ENCODE measurements at regions of chr11 and their contacts with region 1.

Region 1: DNA sequence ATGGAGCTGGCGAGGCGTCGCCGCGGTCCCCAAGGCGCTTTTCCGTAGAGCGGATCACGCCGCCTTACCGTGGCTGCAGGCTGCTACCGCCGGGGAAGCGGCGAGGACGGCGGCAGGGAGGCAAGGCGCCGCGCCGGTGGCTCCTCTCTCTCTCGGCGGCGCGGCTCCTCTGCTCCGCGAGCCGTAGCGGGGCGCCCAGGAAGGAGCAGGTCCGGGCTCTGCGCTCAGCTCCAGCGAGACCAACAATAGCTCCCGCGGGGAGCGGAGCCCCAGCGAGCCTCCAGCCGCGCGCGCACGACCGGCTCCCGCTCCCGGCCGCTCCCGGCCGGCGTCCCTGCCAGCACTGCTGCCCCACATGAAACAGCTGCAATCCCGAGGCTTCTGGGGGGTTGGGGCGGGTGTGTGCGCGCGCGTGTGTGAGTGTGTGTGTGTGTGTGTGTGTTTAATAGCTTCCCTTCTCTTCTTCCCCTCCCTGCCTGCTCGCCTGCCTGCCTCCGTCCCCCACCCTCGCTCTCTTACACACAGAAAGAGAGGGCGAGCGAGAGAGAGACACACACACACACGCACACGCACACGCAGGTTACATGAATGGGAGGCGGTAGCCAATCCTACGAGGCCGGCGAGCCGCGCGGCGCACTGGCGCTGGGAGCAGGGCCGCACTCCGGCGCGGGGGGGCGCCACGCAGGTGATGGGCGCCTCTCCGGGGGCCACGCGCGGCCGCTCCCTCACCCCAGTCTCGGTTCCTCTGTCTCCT is at the start of gene TENM4:
- DNase-seq: peak; percentile 59
- ATAC-seq: peak; percentile 78
- H3K4me3 Mint-ChIP-seq: peak within 1 kb of the TSS; percentile 84
- H3K27ac Mint-ChIP-seq: peak within 1 kb of the TSS; percentile 87
- H3K4me1 Mint-ChIP-seq: peaks cover 44% of the 10 kb centered on the region
- H3K27me3 Mint-ChIP-seq: peaks cover 32% of the 10 kb centered on the region
- CTCF ChIP-seq: no peak
- total RNA-seq, gene TENM4: 1.9 and 2.4 TPM in 2 replicates

Region 2: DNA sequence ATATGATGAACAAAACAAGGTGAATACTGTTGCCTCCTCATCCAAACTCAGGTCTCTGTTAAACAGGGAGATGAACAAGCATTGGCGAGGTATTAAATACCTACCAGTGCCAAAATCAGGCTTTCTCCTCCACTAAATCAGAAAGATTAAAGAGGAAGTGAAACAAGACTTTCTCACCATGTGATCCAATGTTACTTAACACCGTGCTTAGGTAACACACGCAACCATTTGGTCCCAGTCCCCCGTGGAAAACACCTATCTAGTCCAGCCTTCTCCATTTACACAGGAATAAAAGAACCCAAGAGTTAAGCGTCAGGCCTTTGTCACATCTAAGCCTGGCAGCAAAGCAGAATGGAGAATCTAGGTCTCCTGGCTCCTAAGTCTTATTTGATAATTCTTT is 34.2 kb before region 1 on chr11:
- CTCF ChIA-PET with region 1: interaction called, 3 read pairs
- POLR2A ChIA-PET with region 1: no interaction called
- intact Hi-C with region 1: loop called (anchors 1 kb)
- DNase-seq: no peak
- ATAC-seq: peak; percentile 77
- H3K4me3 Mint-ChIP-seq: peak overlapping the region; percentile 15
- H3K27ac Mint-ChIP-seq: peak overlapping the region; percentile 47
- H3K4me1 Mint-ChIP-seq: peaks cover 12% of the 10 kb centered on the region
- H3K27me3 Mint-ChIP-seq: no peaks in the 10 kb centered on the region
- CTCF ChIP-seq: no peak

Region 3: GRCh38 chr11:79482800-79483199 is 42.2 kb after region 1 on chr11:
- CTCF ChIA-PET with region 1: interaction called, 3 read pairs
- POLR2A ChIA-PET with region 1: interaction called, 12 read pairs
- intact Hi-C with region 1: loop called (anchors 2 kb)
- DNase-seq: no peak
- ATAC-seq: peak; percentile 82
- H3K4me3 Mint-ChIP-seq: peak overlapping the region; percentile 24
- H3K27ac Mint-ChIP-seq: peak overlapping the region; percentile 59
- H3K4me1 Mint-ChIP-seq: peaks cover 24% of the 10 kb centered on the region
- H3K27me3 Mint-ChIP-seq: no peaks in the 10 kb centered on the region
- CTCF ChIP-seq: no peak

Region 4: GRCh38 chr11:80815752-80816453 is 1375.3 kb after region 1 on chr11:
- CTCF ChIA-PET with region 1: no interaction called
- POLR2A ChIA-PET with region 1: no interaction called
- intact Hi-C with region 1: loop called (anchors 5 kb)
- DNase-seq: no peak
- ATAC-seq: peak; percentile 76
- H3K4me3 Mint-ChIP-seq: peak overlapping the region; percentile 13
- H3K27ac Mint-ChIP-seq: peak overlapping the region; percentile 83
- H3K4me1 Mint-ChIP-seq: peaks cover 22% of the 10 kb centered on the region
- H3K27me3 Mint-ChIP-seq: no peaks in the 10 kb centered on the region
- CTCF ChIP-seq: no peak